ENCODE measurements at regions of chr7 and their contacts with region 1.

Region 1: DNA sequence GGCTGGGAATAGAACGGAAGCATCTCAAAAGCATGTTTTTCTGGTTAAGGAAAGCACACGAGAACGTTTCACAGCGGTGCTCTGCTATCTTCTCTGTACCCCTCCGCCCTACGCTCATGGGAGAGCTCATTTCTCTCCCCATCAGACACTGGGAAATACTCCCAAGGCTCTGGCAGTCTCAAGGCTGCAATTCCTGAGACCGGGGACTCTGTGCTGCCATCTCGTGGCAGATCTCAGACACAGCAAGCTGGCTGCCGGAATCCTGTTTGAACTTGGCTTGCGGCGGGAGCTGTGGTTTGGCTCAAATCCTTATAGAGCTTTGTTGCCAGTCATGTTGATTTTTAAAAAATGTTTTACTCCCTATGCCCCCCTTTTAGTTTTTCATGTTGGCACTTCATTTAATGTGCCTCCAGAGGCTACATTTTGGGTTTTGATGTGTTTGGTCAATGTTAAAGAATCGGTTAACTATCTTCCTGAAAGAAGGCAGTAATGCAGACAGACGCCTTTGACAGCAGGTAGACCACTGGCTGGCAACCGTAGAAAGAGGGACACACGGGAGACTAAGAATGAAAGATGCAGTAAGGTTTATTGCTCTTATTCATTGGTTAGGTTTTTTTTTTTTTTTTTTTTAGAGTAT is 27.6 kb downstream of the BMPER start:
- DNase-seq: peak; percentile 61
- H3K4me3 ChIP-seq: no peak overlapping the region
- H3K27ac ChIP-seq: no peak overlapping the region
- H3K27me3 ChIP-seq: no peaks in the 10 kb centered on the region
- CTCF ChIP-seq: peak; percentile 99

Region 2: DNA sequence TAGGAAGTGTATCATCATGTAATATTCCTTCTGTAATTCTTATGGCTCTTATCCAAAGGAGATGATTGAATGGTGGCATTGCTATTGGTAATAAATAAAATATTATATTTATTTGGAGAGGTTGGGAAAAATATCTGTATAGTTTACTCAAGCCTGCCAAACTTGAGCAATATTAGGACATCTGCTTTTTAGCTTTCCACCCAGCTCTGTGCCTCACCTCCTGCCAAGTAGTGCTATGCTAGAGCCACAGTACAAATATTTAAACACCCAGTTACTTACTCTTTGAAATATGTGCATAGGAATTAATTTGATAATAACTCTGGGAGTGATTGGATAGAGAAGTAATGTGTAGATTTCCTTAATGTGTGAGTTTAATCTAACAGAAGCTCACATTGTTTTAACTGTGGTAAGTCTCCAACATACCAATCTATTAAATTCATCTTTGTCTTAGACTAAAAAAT is 674.4 kb before region 1 on chr7:
- CTCF ChIA-PET with region 1: interaction called, 19 read pairs
- POLR2A ChIA-PET with region 1: no interaction called
- DNase-seq: peak; percentile 3
- H3K4me3 ChIP-seq: no peak overlapping the region
- H3K27ac ChIP-seq: no peak overlapping the region
- H3K27me3 ChIP-seq: no peaks in the 10 kb centered on the region
- CTCF ChIP-seq: no peak

Region 3: DNA sequence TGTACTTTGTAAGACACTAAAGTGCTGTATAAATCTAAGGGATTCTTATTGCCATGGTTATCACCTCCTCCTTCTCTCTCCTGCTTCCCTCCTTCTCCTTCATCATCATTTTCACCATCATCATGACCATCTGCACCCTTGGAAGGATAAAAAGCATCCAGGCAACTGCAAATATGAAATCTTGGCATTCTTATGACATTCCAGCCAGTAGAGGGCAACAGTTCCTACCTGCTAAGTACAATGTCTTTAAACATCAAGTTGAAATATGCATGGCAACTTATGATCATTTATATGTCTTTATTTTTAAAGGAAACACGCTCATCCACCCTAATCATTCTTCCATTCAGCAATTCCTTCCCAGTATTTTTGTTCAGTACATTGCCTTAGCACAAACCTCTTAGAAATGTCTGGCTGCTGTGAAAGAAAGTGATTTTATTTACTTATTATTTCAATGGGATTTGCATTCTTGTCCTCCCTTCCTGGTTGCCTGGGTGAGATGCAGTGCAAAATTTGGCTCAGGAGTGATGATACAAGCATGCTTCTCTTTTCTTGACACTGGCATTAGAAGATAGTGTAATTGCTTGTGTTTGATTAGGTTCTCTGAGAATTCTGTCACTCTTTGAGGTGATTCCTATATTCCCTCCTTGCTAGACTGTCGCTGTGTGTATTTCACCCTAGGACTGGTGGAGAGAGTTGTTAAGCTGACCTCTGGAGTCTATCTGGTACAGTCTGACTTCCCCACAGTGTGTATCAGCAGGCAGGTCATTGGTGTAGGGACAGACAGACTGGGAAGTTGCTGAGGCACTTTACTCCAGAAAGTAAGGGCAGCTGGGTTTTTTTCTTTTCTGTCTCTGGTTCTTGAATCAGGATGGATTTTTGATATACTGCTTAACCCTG is 216.1 kb before region 1 on chr7:
- CTCF ChIA-PET with region 1: interaction called, 21 read pairs
- POLR2A ChIA-PET with region 1: no interaction called
- DNase-seq: no peak
- H3K4me3 ChIP-seq: no peak overlapping the region
- H3K27ac ChIP-seq: no peak overlapping the region
- H3K27me3 ChIP-seq: no peaks in the 10 kb centered on the region
- CTCF ChIP-seq: peak; percentile 66

Region 4: GRCh38 chr7:33895025-33895804 is 37.7 kb before region 1 on chr7:
- CTCF ChIA-PET with region 1: interaction called, 46 read pairs
- POLR2A ChIA-PET with region 1: no interaction called
- DNase-seq: no peak
- H3K4me3 ChIP-seq: no peak overlapping the region
- H3K27ac ChIP-seq: no peak overlapping the region
- H3K27me3 ChIP-seq: peaks cover 12% of the 10 kb centered on the region
- CTCF ChIP-seq: peak; percentile 96

Region 5: GRCh38 chr7:33952824-33953223 is 19.9 kb after region 1 on chr7:
- CTCF ChIA-PET with region 1: interaction called, 38 read pairs
- POLR2A ChIA-PET with region 1: no interaction called
- DNase-seq: no peak
- H3K4me3 ChIP-seq: no peak overlapping the region
- H3K27ac ChIP-seq: no peak overlapping the region
- H3K27me3 ChIP-seq: no peaks in the 10 kb centered on the region
- CTCF ChIP-seq: no peak

Region 6: GRCh38 chr7:34069630-34070270 is 136.8 kb after region 1 on chr7:
- CTCF ChIA-PET with region 1: interaction called, 17 read pairs
- POLR2A ChIA-PET with region 1: no interaction called
- DNase-seq: no peak
- H3K4me3 ChIP-seq: no peak overlapping the region
- H3K27ac ChIP-seq: no peak overlapping the region
- H3K27me3 ChIP-seq: no peaks in the 10 kb centered on the region
- CTCF ChIP-seq: no peak

Region 7: DNA sequence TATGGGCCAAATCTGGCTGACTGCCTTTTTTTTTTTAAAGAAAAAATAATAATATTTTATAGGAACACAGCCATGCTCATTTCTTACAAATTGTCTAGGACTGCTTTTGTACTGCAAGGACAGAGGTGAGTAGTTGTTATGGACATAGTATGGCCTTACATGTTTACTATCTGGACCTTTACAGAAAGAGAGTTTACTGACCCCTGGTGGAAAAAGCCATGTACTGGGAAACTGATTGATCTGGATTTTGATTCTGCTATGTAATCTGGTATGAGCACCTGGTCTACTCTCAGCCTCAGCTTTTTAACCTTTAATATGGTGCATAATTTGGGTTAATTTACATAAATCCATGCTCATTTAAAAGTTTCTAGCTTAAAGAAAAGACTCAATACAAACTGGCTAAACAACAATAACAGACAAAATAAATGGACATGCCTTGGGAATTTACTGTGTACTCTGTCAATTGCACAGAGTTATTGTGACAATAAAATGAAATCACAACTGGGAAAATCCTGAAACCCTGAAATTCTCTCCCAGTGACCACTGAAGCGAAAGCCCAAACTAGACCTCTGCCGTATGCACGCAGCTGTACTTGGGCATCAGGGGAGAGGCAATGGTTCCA is 233.1 kb after region 1 on chr7:
- CTCF ChIA-PET with region 1: interaction called, 14 read pairs
- POLR2A ChIA-PET with region 1: no interaction called
- DNase-seq: no peak
- H3K4me3 ChIP-seq: no peak overlapping the region
- H3K27ac ChIP-seq: no peak overlapping the region
- H3K27me3 ChIP-seq: no peaks in the 10 kb centered on the region
- CTCF ChIP-seq: peak; percentile 84

Measured in AG04450 (cell line).